G401 (cell line): ENCODE measurements at regions of chr6 and their contacts with region 1.

Region 1: GRCh38 chr6:132530293-132530974 is 7.6 kb upstream of the TAAR9 start:
- DNase-seq: peak; percentile 79

Region 2: GRCh38 chr6:132798869-132799538 is 268.6 kb after region 1 on chr6:
- in situ Hi-C with region 1: loop called (anchors 25 kb)
- DNase-seq: peak; percentile 81

Region 3: DNA sequence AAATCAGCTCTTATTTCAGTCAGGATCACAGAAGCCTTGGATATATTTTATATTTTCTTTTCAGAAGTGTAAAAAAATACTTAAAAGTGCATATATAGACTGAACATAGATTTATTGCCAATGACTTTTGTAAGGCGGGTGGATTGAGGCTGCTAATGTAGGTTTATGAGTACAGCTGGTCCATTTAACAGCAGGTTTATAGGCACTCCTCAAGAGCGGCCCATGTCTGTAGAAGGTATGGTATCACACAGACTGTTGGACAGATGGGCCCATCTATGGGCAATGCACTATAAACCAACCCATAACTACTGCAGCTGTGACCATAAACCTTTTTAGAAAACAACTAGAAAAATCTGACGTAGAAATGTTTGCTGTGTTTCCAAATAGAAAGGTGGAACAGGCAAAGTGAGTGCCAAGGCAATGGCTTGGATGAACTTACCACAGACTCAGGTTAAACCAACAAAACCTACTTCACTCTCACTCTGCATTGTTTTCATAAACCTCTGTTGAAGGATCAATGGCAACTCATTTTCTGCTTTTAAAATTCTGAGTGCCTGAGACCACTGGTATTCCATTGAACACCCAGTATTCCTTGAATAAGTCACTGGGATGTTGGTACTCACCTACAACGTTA is 540.1 kb after region 1 on chr6:
- in situ Hi-C with region 1: no loop called
- DNase-seq: no peak